ENCODE measurements at regions of chr6 and their contacts with region 1.

Region 1: GRCh38 chr6:147382945-147383554 is 125.4 kb upstream of the SAMD5 start:
- DNase-seq: no peak
- H3K4me3 ChIP-seq: no peak overlapping the region
- CTCF ChIP-seq: peak; percentile 29

Region 2: DNA sequence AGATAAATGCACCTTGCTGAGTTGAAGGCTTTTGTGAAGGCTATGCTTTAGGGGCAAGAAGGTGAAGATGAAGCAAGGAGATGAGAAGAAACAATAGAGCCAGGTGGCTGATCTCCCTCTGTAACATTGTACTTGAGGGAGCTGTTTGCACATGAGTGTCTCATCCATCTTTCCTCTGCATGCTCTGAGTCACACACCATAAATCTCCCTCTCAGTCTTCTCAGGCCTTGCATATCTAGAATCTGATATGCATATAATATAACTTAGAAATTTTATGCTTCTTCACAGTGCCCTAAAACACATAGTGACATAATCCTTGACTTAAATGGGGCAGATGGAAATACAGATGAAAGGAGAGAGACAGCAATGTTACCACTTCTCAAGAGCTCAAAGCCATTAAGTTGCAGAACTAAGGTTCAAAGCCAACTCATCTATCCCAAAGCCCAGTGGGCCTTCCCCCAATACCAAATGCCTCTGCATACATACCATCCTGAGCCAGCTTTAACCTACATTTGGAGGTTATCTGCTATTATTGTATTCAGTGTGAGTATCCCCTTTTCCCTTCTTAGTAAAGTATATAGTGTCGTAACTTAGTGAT is 241.2 kb before region 1 on chr6:
- CTCF ChIA-PET with region 1: no interaction called
- POLR2A ChIA-PET with region 1: no interaction called
- DNase-seq: no peak
- H3K4me3 ChIP-seq: no peak overlapping the region
- CTCF ChIP-seq: no peak

Region 3: DNA sequence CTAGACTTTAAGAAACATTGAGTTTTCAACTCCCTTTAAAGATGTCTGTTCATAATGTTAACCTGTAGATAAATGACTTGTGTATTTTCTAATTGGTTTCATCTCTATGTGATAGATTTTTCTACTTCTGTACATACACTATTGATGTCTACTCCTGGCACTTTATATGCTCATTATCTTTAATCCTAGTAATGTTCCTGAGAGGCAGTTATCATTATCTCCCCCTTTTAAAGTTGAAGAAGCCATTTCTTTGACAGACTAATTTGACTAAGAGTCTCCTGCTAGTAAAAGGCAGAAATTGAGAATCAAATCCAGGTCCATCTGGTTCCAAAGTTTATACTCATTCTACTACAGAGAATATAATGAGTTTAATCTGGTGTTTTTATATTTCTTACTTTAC is 11.7 kb before region 1 on chr6:
- CTCF ChIA-PET with region 1: interaction called, 27 read pairs
- POLR2A ChIA-PET with region 1: no interaction called
- DNase-seq: no peak
- H3K4me3 ChIP-seq: no peak overlapping the region
- CTCF ChIP-seq: no peak

Region 4: GRCh38 chr6:147418523-147418922 is 35.5 kb after region 1 on chr6:
- CTCF ChIA-PET with region 1: no interaction called
- POLR2A ChIA-PET with region 1: no interaction called
- DNase-seq: no peak
- H3K4me3 ChIP-seq: no peak overlapping the region
- CTCF ChIP-seq: no peak